ENCODE measurements at regions of chr16 and their contacts with region 1.

Region 1: GRCh38 chr16:68907781-68908181 is 64.5 kb downstream of the TANGO6 start:
- DNase-seq: peak in 1 of 2 experiments; percentile 72
- H3K4me3 ChIP-seq: no peak overlapping the region
- H3K4me3 Mint-ChIP-seq: peak overlapping the region; percentile 57
- H3K27ac Mint-ChIP-seq: peak overlapping the region; percentile 96
- H3K4me1 ChIP-seq: peaks cover 35% of the 10 kb centered on the region
- H3K4me1 Mint-ChIP-seq: peaks cover 25% of the 10 kb centered on the region
- H3K27me3 ChIP-seq: no peaks in the 10 kb centered on the region
- H3K27me3 Mint-ChIP-seq: no peaks in the 10 kb centered on the region
- CTCF ChIP-seq: no peak

Region 2: GRCh38 chr16:68873635-68874471 is 33.9 kb before region 1 on chr16:
- CTCF ChIA-PET with region 1: no interaction called
- POLR2A ChIA-PET with region 1: interaction called, 3 read pairs
- intact Hi-C with region 1: loop called (anchors 1 kb)
- DNase-seq: peak; percentile 71 to 76
- H3K4me3 ChIP-seq: no peak overlapping the region
- H3K4me3 Mint-ChIP-seq: peak overlapping the region; percentile 68
- H3K27ac Mint-ChIP-seq: peak overlapping the region; percentile 99
- H3K4me1 ChIP-seq: peaks cover 52% of the 10 kb centered on the region
- H3K4me1 Mint-ChIP-seq: peaks cover 29% of the 10 kb centered on the region
- H3K27me3 ChIP-seq: no peaks in the 10 kb centered on the region
- H3K27me3 Mint-ChIP-seq: no peaks in the 10 kb centered on the region
- CTCF ChIP-seq: no peak

Region 3: GRCh38 chr16:68972720-68973119 is 64.9 kb after region 1 on chr16:
- CTCF ChIA-PET with region 1: no interaction called
- POLR2A ChIA-PET with region 1: no interaction called
- intact Hi-C with region 1: loop called (anchors 5 kb)
- DNase-seq: peak; percentile 54 to 61
- H3K4me3 ChIP-seq: no peak overlapping the region
- H3K4me3 Mint-ChIP-seq: no peak overlapping the region
- H3K27ac Mint-ChIP-seq: peak overlapping the region; percentile 5
- H3K4me1 ChIP-seq: peaks cover 16% of the 10 kb centered on the region
- H3K4me1 Mint-ChIP-seq: peaks cover 21% of the 10 kb centered on the region
- H3K27me3 ChIP-seq: no peaks in the 10 kb centered on the region
- H3K27me3 Mint-ChIP-seq: no peaks in the 10 kb centered on the region
- CTCF ChIP-seq: peak; percentile 39 to 66

Region 4: DNA sequence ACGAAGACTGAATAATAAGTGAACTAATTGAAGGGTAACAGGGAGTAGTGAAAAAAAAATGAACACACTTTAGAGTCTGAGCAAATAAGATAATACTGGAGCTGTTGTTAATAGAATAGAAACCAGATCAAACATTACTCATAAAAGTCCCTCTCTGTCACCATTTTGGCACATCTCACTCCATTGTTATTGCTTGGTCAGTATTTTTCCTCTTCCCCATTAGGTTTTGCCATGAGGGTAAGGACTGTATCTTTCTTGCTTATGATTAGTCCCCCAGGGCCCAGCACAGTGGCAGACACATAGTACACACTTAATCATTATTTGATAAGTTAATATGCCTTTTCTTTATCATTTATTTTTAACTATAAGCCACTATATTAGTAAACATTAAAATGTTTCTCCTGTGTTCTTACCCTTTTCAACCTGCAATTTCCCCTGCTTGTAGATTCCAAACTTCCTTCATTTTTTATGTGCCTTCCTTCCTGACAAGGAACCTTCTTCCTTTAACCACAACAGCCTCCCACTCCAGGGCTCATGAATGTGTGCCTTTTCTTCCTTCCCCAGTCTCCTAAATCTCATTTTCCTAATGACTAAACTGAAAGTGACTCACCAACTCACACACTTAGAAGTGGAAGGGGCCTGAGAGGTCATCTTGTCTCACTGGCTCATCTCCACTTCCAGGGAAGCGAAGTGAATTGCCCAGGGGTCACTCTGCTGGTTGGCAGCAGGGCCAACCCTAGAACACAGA is 109.4 kb after region 1 on chr16:
- CTCF ChIA-PET with region 1: no interaction called
- POLR2A ChIA-PET with region 1: no interaction called
- intact Hi-C with region 1: no loop called
- DNase-seq: no peak
- H3K4me3 ChIP-seq: no peak overlapping the region
- H3K4me3 Mint-ChIP-seq: no peak overlapping the region
- H3K27ac Mint-ChIP-seq: peak overlapping the region; percentile 5
- H3K4me1 ChIP-seq: no peaks in the 10 kb centered on the region; the same call in 1 of the 2 replicates
- H3K4me1 Mint-ChIP-seq: peaks cover 17% of the 10 kb centered on the region
- H3K27me3 ChIP-seq: no peaks in the 10 kb centered on the region
- H3K27me3 Mint-ChIP-seq: no peaks in the 10 kb centered on the region
- CTCF ChIP-seq: no peak

Measured in Caco-2 (cell line).